K562 (cell line): ENCODE measurements at regions of chr20 and their contacts with region 1.

Region 1: GRCh38 chr20:19995220-19995863 is 21.8 kb upstream of the NAA20 start:
- DNase-seq: peak; percentile 37 to 51 (median 45)
- ATAC-seq: peak; percentile 61; the same call in 2 of the 3 replicates
- H3K4me3 ChIP-seq: no peak overlapping the region
- H3K27ac ChIP-seq: no peak overlapping the region
- H3K4me1 ChIP-seq: no peaks in the 10 kb centered on the region
- H3K27me3 ChIP-seq: peaks cover 3 to 10% of the 10 kb centered on the region in 2 experiments; a peak in 3 of 5 replicates
- CTCF ChIP-seq: peak; percentile 47 to 73 (median 56); a peak in 5 of 6 replicates
- EP300 ChIP-seq: no peak
- POLR2A ChIP-seq: no peak
- RAD21 ChIP-seq: peak; percentile 42 to 57

Region 2: DNA sequence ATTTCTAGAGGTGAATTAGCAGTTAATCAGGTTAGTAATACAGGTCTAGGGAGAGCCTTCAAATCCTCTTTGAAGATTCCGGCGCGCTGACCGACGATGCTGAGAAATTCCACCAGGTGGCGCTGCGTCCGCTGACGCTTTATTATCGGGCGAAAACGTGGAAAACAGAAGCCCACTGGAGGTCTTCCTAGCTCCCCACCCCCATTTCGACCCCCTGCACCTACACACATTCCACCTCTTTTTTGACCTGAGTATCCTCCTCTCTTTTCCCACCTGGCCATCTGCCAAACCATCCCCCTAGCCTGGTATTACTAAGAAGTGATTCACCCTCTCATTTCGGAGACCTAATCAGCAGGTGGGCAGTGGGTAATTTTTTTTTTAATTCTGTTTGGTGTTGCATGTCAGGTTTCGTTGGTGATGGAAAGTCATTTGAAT is 302.6 kb before region 1 on chr20:
- CTCF ChIA-PET with region 1: no interaction called
- POLR2A ChIA-PET with region 1: no interaction called
- in situ Hi-C with region 1: no loop called
- intact Hi-C with region 1: loop called (anchors 2 kb)
- DNase-seq: peak; percentile 32 to 52 (median 42)
- ATAC-seq: peak; percentile 62; the same call in 1 of the 3 replicates
- H3K4me3 ChIP-seq: no peak overlapping the region
- H3K27ac ChIP-seq: no peak overlapping the region
- H3K4me1 ChIP-seq: no peaks in the 10 kb centered on the region
- H3K27me3 ChIP-seq: no peaks in the 10 kb centered on the region; a peak in 1 of 5 replicates
- CTCF ChIP-seq: peak; percentile 56 to 76 (median 59)
- EP300 ChIP-seq: no peak
- POLR2A ChIP-seq: no peak
- RAD21 ChIP-seq: peak in 1 of 2 experiments; percentile 49; a peak in 3 of 4 replicates

Region 3: DNA sequence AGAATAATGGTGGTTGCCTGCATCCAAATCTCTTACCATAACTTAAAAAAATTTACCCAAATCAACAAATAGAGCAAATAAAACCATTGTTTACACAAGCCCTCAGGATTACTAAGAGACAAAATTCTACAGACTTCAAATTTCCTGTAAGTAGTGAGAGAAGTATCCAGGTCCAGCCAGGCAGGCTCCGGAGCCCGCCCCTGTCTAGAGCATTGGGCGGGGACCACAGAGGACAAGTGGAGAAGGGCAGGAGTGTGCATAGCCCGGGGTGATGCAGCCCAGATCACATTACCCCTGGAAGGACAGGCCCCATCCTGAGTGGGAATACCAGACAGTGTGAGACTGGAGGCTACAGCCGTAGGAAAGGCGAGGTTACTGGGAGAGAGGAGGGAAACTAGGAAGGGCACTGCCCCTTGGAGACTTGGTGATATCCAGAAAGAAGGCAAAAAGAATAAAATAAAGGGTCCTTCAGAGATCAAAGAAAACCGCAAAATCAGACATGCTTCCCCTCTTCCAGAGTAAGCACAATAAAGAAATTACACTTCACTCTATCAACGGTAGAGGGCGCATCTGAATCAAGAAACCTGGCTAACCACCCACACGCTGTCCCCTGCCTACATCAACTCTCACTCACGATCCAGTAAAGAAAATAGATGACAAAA is 210.7 kb before region 1 on chr20:
- CTCF ChIA-PET with region 1: no interaction called
- POLR2A ChIA-PET with region 1: no interaction called
- in situ Hi-C with region 1: no loop called
- intact Hi-C with region 1: loop called (anchors 2 kb)
- DNase-seq: peak; percentile 29 to 52 (median 32)
- ATAC-seq: peak; percentile 80
- H3K4me3 ChIP-seq: no peak overlapping the region
- H3K27ac ChIP-seq: no peak overlapping the region
- H3K4me1 ChIP-seq: no peaks in the 10 kb centered on the region
- H3K27me3 ChIP-seq: no peaks in the 10 kb centered on the region; a peak in 1 of 5 replicates
- CTCF ChIP-seq: peak; percentile 47 to 61 (median 56)
- EP300 ChIP-seq: no peak
- POLR2A ChIP-seq: no peak
- RAD21 ChIP-seq: peak; percentile 43 to 52

Region 4: DNA sequence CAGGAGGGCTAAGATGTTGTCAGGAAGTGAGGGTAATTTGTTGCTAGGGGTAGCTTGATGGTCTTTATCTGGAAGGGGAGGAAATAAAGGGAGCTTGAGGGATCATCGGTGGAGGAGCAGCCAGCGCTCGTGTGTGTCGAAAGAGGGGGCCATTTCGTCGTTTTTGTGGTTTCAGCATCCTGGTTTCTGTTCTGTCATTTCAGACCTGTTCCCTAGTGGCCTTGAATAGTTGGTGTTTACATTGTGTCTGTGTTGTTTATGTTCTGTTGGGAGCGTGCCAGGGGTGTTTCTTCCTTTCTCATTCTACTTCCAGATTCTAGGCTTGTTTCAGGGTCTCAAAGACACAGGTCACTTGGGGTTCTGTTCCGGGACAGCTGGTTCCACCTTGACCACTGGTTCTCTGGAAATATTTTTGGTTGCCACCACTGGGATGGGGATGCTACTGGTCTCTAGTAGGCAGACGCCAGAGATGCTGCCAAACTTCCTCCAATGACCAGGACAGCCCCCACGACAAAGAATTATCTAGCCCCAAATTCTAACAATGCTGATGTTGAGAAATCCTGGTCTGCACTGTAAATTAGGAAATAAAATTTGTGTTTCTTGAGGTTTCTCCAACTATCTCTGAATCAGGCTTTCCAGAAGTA is 92.1 kb before region 1 on chr20:
- CTCF ChIA-PET with region 1: interaction called, 3 read pairs
- POLR2A ChIA-PET with region 1: no interaction called
- in situ Hi-C with region 1: no loop called
- intact Hi-C with region 1: loop called (anchors 10 kb)
- DNase-seq: peak in 2 of 4 experiments; percentile 8 to 12
- ATAC-seq: no peak
- H3K4me3 ChIP-seq: no peak overlapping the region
- H3K27ac ChIP-seq: no peak overlapping the region
- H3K4me1 ChIP-seq: no peaks in the 10 kb centered on the region
- H3K27me3 ChIP-seq: no peaks in the 10 kb centered on the region
- CTCF ChIP-seq: peak; percentile 27 to 51 (median 33); a peak in 4 of 6 replicates
- EP300 ChIP-seq: no peak
- POLR2A ChIP-seq: no peak
- RAD21 ChIP-seq: peak; percentile 11 to 38; a peak in 2 of 4 replicates